Motor neuron (in vitro differentiated cells): ENCODE measurements at regions of chr3 and their contacts with region 1.

Region 1: GRCh38 chr3:46759239-46760167 is 41.8 kb upstream of the PRSS50 start:
- ATAC-seq: peak in 1 of 8 experiments; percentile 75
- H3K4me3 ChIP-seq: no peak overlapping the region
- H3K27ac ChIP-seq: no peak overlapping the region
- H3K4me1 ChIP-seq: no peaks in the 10 kb centered on the region

Region 2: DNA sequence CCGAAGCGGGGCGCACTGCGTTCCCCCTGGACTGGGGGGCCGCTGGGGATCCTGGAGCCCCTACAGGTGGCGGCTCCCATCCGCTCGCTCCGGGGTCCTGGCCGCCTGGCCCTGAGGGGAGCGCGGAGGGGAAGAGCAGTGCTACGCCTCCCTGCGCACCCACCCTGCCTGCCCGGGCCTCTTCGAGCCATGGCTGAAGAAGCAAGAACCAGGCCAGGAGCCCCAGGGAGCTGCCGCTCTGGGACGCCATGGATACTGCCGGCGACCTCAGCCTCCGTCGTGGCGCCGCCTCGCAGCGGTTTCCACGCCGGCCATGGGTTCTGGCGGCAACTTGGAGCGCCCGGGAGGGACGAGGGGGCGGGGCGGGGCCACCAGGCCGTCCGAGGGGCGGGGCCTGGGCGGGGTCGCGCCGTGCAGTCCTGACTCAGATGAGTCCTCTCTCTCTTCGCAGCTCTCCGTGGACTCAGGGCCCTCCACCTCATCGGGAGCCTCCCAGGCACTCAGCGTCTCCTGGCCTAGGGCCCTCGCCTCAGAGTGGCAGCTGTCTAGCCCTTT is 52.8 kb after region 1 on chr3:
- in situ Hi-C with region 1: loop called in 1 of 9 experiments (anchors 10 kb)
- ATAC-seq: peak; percentile 87 to 98 (median 94)
- H3K4me3 ChIP-seq: peak overlapping the region in 3 of 5 donors; percentile 2 to 25 (median 19)
- H3K27ac ChIP-seq: peak overlapping the region in 1 of 2 donors; percentile 34
- H3K4me1 ChIP-seq: peaks cover 0 to 10% of the 10 kb centered on the region in 2 donors